Calu3 (cell line): ENCODE measurements at regions of chr6 and their contacts with region 1.

Region 1: DNA sequence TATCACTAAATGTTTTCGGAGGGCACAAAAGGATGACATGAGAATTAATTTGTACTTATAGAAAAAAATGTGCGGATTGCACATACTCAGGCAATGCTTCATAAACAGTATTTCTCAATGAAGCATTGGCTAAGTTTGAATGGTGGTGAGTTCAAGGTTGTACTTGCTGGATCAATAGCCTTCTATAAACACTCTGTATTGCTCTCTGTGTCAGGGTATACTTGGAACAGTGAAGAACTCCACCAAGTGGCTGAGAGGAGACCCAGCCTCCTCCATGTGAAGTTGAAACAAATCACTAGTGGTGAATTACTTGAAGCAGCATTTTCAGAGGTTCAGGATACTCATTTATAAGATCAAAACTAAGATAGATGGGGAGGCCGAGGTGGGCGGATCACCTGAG is 360.6 kb downstream of the RIMS1 start:
- DNase-seq: peak; percentile 10
- H3K4me3 Mint-ChIP-seq: no peak overlapping the region
- H3K27ac Mint-ChIP-seq: no peak overlapping the region
- H3K4me1 Mint-ChIP-seq: peaks cover 9% of the 10 kb centered on the region
- H3K27me3 Mint-ChIP-seq: no peaks in the 10 kb centered on the region
- CTCF ChIP-seq: no peak

Region 2: GRCh38 chr6:72140795-72141194 is 106.1 kb before region 1 on chr6:
- CTCF ChIA-PET with region 1: no interaction called
- intact Hi-C with region 1: loop called (anchors 1 kb)
- DNase-seq: no peak
- H3K4me3 Mint-ChIP-seq: no peak overlapping the region
- H3K27ac Mint-ChIP-seq: no peak overlapping the region
- H3K4me1 Mint-ChIP-seq: no peaks in the 10 kb centered on the region
- H3K27me3 Mint-ChIP-seq: no peaks in the 10 kb centered on the region
- CTCF ChIP-seq: no peak

Region 3: DNA sequence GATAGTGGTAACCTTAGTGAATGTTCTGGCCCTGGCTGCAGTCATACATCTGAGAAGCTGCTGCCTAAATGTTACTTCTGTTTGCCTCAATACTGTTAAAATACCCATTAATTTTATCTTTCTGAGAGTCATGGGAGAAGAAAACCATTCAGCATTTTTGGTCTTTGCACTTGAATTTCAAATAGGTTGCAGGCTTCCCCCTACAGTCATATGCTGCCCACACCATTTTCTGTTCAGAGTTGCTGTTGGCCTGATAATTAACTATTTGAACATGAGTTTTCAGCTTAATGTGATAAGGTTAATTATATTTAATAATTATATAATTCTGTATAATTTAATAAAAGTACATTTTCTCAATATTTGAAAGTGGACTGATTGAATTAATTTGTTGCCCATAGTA is 49.4 kb after region 1 on chr6:
- CTCF ChIA-PET with region 1: no interaction called
- intact Hi-C with region 1: no loop called
- DNase-seq: no peak
- H3K4me3 Mint-ChIP-seq: no peak overlapping the region
- H3K27ac Mint-ChIP-seq: no peak overlapping the region
- H3K4me1 Mint-ChIP-seq: no peaks in the 10 kb centered on the region
- H3K27me3 Mint-ChIP-seq: no peaks in the 10 kb centered on the region
- CTCF ChIP-seq: no peak

Region 4: DNA sequence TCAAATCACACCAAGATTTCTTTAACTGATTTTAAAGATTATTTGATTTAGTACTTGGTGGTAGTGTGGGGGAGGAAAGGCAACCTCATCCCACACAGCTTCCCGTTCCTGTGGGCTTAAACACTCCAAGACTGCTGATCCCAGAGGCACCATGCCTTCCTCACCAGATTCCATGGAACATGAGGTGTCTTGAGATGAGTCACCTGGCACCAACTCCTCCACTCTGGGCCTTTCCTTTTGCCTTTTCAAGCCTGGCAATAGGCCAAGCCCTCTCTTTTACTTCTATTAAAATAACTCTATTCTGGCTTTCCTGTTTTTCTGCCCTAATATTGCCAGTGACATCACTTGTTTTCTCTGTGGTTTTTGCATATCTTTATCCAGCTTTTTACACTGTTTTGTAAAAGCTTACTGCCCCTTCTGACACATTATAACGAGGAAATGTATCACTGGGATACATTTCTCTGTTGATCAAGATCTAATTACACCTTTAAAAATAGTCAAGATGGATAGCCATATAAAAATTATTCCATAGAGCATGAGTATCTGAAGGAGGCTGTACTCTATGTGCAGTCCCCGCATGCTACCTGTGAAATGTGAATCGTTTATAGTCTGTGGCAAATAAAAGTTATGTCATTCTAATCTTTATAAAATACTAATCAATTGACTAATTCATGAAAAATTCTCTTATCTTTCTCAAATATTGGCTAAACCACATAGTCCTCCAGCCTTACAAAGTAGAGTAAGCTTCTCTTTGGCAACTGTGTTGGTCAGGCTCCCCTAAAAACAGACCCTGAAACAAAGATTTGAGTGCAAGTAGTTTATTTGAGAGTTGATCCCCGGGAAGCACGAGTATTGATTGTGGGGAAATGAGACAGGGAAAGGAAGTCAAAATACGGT is 117.2 kb after region 1 on chr6:
- CTCF ChIA-PET with region 1: no interaction called
- intact Hi-C with region 1: loop called (anchors 10 kb)
- DNase-seq: peak; percentile 57
- H3K4me3 Mint-ChIP-seq: no peak overlapping the region
- H3K27ac Mint-ChIP-seq: peak overlapping the region; percentile 8
- H3K4me1 Mint-ChIP-seq: peaks cover 24% of the 10 kb centered on the region
- H3K27me3 Mint-ChIP-seq: no peaks in the 10 kb centered on the region
- CTCF ChIP-seq: no peak

Region 5: GRCh38 chr6:72553531-72554511 is 306.9 kb after region 1 on chr6:
- CTCF ChIA-PET with region 1: no interaction called
- intact Hi-C with region 1: no loop called
- DNase-seq: peak; percentile 13
- H3K4me3 Mint-ChIP-seq: peak overlapping the region; percentile 5
- H3K27ac Mint-ChIP-seq: peak overlapping the region; percentile 41
- H3K4me1 Mint-ChIP-seq: peaks cover 28% of the 10 kb centered on the region
- H3K27me3 Mint-ChIP-seq: no peaks in the 10 kb centered on the region
- CTCF ChIP-seq: no peak

Region 6: GRCh38 chr6:73180763-73181619 is 934.1 kb after region 1 on chr6:
- CTCF ChIA-PET with region 1: no interaction called
- intact Hi-C with region 1: loop called (anchors 10 kb)
- DNase-seq: peak; percentile 26
- H3K4me3 Mint-ChIP-seq: peak overlapping the region; percentile 41
- H3K27ac Mint-ChIP-seq: no peak overlapping the region
- H3K4me1 Mint-ChIP-seq: no peaks in the 10 kb centered on the region
- H3K27me3 Mint-ChIP-seq: peaks cover 26% of the 10 kb centered on the region
- CTCF ChIP-seq: peak; percentile 58